MCF 10A (cell line): ENCODE measurements at regions of chr4 and their contacts with region 1.

Region 1: DNA sequence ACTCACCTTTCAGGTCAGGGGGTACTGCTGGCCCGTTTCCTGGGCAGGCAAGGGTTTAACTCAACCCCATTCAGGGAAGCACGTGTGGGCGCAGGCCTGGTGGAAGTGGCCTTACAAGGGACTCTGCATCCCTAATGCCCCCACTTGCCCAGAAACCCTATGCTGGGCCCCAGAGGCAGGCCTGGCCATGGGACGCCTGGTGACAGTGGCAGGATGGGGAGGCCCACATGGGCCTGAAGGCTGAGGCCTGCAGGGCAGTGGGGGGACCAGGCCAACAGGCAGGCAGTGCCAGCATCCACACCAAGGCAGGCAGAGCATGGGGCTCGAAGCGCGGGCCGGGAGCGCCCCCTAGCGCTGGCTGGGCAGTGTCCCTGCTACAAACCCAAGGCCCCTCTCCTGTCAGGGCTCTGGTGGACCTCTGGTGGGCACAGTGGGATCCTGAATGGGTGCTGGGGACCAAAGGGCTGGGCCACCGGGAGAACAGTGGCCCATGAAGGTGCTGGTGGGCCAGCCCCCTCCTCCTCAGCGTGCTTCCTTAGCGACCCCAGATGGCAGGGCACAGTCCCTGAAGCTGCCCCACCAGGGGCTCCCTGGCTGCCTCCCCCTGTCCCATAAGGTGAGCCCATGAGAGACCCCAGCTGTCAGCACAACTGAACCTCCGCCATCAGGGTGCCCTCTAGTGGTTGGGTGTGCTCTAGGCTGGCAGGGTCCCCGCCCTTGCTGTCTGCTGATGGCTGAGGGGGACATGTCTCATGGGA is 16.8 kb downstream of the FGFR3 start:
- DNase-seq: peak; percentile 68
- H3K4me3 Mint-ChIP-seq: no peak overlapping the region
- H3K27ac Mint-ChIP-seq: no peak overlapping the region
- H3K4me1 Mint-ChIP-seq: no peaks in the 10 kb centered on the region
- H3K27me3 Mint-ChIP-seq: no peaks in the 10 kb centered on the region
- CTCF ChIP-seq: peak; percentile 89

Region 2: GRCh38 chr4:1752284-1753041 is 57.5 kb before region 1 on chr4:
- CTCF ChIA-PET with region 1: interaction called, 151 read pairs
- POLR2A ChIA-PET with region 1: interaction called, 9 read pairs
- intact Hi-C with region 1: loop called (anchors 1 kb)
- DNase-seq: peak; percentile 70
- H3K4me3 Mint-ChIP-seq: no peak overlapping the region
- H3K27ac Mint-ChIP-seq: no peak overlapping the region
- H3K4me1 Mint-ChIP-seq: no peaks in the 10 kb centered on the region
- H3K27me3 Mint-ChIP-seq: no peaks in the 10 kb centered on the region
- CTCF ChIP-seq: no peak

Region 3: GRCh38 chr4:1792832-1793495 is 17.0 kb before region 1 on chr4 and contains the start of gene FGFR3:
- CTCF ChIA-PET with region 1: interaction called, 16 read pairs
- POLR2A ChIA-PET with region 1: interaction called, 3 read pairs
- intact Hi-C with region 1: no loop called
- DNase-seq: peak; percentile 41
- H3K4me3 Mint-ChIP-seq: peak within 1 kb of the TSS; percentile 39
- H3K27ac Mint-ChIP-seq: no peak within 1 kb of the TSS
- H3K4me1 Mint-ChIP-seq: peaks cover 9% of the 10 kb centered on the region
- H3K27me3 Mint-ChIP-seq: no peaks in the 10 kb centered on the region
- CTCF ChIP-seq: no peak
- total RNA-seq, gene FGFR3: 2.5 and 6.5 TPM in 2 replicates

Region 4: DNA sequence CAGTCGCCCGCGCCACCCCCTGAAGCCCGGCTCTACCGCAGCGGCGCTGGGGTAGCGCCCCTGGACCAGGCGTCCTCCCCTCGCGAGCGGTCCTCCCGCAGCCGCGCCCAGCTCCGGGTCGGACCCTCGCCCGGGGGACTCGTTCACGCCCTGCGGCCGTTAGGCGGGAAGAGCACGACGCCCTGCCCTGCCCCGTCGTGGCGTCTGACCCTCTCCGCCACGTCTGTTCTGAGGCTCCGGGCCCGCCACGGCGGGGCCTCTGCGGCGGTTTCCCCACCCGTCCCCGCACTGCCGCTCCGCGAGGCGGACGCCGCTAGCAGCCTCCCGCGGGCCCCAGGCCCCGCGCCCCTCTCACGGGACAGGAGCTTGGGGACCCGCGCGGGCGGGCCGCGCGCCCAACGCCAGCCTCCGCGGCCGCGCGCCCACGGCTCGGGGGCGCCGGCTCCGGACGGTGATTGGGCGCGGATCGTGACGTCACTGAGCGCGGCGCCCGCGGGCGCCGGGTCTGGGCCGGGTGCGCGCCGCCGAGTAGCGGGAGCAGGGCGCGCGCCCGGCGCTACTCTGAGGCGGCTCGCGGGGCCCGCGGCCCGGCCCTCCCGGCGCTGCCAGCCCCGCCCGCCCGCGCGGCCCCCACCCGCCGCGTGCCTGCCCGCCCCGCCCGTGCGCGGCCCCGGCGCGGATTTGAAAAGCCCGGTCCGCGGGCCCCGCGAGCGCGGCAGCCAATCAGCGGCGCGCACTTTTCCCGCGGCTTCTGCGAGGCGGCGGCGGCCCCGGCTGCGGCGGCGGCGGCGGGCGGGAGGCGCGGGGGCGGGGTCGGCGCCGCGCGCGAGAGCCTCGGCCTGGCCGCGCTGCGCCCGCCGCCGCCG is 60.9 kb after region 1 on chr4 and contains the start of gene NSD2:
- CTCF ChIA-PET with region 1: no interaction called
- POLR2A ChIA-PET with region 1: no interaction called
- intact Hi-C with region 1: no loop called
- DNase-seq: peak; percentile 82
- H3K4me3 Mint-ChIP-seq: peak within 1 kb of the TSS; percentile 88
- H3K27ac Mint-ChIP-seq: peak within 1 kb of the TSS; percentile 82
- H3K4me1 Mint-ChIP-seq: peaks cover 21% of the 10 kb centered on the region
- H3K27me3 Mint-ChIP-seq: no peaks in the 10 kb centered on the region
- CTCF ChIP-seq: no peak
- total RNA-seq, gene NSD2: 100 and 109 TPM in 2 replicates

Region 5: GRCh38 chr4:1922821-1923220 is 112.9 kb after region 1 on chr4:
- CTCF ChIA-PET with region 1: no interaction called
- POLR2A ChIA-PET with region 1: no interaction called
- intact Hi-C with region 1: no loop called
- DNase-seq: no peak
- H3K4me3 Mint-ChIP-seq: no peak overlapping the region
- H3K27ac Mint-ChIP-seq: no peak overlapping the region
- H3K4me1 Mint-ChIP-seq: no peaks in the 10 kb centered on the region
- H3K27me3 Mint-ChIP-seq: no peaks in the 10 kb centered on the region
- CTCF ChIP-seq: no peak